Right ventricle myocardium inferior (tissue), 1 donor: ENCODE measurements at regions of chr11 and their contacts with region 1.

Region 1: DNA sequence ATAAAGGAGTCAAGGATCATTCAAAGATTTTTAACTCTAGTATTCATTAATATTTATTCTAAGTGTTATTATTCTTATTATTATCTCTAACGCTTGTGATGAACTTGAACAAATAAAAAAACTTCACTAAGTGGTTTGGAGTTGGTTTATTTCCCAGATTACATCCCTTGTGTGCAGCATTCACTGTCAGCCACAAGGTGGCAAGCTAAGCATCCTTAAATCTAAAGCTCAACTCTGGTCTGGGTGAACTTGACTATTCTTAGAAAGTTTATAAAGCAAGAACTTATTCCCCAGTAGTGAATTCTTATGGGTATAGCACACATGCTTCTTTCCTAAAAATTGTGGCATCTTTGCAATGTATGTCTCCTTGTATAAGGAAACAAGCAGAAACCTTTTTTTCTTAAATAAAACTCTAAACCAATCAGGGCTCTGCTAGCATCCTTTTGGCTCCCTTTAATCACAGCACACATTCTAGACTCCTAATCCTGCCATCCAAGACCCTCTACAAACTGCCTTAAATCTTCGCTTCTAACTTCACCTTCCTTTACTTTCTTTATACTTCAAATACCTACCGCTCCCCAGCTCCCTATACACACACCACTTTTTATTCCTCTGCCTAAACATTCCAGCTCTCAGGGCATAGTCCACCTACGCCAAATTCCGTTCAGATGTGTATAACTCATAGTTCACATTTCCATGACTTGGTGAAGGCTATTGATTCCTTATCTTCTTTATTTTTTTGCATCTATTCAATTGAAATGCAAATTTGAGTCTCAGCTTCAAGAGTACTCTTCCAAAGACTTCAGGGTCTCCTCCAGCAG is 1068.8 kb downstream of the DLG2 start:
- DNase-seq: no peak
- ATAC-seq: no peak

Region 2: GRCh38 chr11:84714316-84714780 is 156.1 kb after region 1 on chr11:
- intact Hi-C with region 1: loop called (anchors 2 kb)
- DNase-seq: peak; percentile 60
- ATAC-seq: peak; percentile 59